Activated CD4-positive, alpha-beta memory T cell treated with anti-CD3 and anti-CD28 coated beads, Interleukin-2, amount 10 ng/mL, durations not matched to agents 7 days and 5 days (primary cell): ENCODE measurements at regions of chr3 and their contacts with region 1.

Region 1: DNA sequence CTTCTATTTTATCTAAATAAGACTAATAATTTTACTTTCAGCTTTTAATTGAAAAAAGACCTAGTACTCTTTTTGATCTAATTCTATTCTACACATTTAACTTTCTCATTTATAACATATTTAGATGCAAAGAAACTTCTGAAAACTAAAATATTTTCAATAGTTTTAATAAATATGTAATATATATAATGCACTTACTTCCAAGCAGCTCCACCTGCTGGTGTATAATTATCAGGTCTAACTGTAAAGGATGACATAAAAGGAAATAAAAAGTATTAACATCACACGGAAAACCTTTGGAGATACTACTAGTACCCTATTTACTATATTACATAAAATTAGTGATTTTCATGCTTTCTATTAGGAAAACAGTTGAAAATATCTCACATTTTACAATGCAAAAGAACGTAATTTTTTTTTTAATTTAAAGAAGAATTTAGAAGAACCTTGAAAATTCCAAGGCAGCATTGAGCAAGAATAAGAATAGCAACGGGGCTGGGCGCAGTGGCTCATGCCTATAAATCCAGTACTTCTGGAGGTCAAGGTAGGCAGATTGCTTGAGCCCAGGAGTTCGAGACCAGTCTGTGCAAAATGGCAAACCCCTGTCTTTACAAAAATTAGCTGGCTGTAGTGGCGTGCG is 10.2 kb downstream of the PLSCR5 start:
- DNase-seq: no peak
- H3K4me3 Mint-ChIP-seq: no peak overlapping the region
- H3K27ac Mint-ChIP-seq: no peak overlapping the region
- H3K4me1 Mint-ChIP-seq: no peaks in the 10 kb centered on the region
- H3K27me3 Mint-ChIP-seq: peaks cover 16% of the 10 kb centered on the region

Region 2: GRCh38 chr3:146189519-146190173 is 405.3 kb before region 1 on chr3:
- CTCF ChIA-PET with region 1: interaction called, 10 read pairs
- POLR2A ChIA-PET with region 1: no interaction called
- DNase-seq: peak; percentile 16
- H3K4me3 Mint-ChIP-seq: no peak overlapping the region
- H3K27ac Mint-ChIP-seq: no peak overlapping the region
- H3K4me1 Mint-ChIP-seq: no peaks in the 10 kb centered on the region
- H3K27me3 Mint-ChIP-seq: peaks cover 1% of the 10 kb centered on the region

Region 3: DNA sequence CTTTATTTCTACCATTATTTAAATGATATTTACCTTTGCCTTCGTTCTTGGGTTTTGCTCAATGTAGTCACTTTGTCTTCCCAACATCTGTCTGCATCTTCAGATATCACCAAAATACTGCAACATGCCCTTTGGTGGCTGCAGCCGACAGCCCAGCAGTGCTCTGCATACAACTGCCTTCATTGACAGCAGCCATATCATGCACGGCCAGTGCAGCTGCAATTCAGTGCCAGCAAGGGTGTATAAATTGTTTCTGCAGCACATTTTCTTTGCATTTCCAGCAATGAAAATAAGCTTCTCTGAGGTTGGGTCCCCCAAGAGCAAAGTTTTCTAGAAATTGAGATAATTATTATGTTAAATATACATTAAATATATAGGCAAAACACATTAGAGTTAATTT is 16.1 kb after region 1 on chr3:
- CTCF ChIA-PET with region 1: no interaction called
- POLR2A ChIA-PET with region 1: no interaction called
- DNase-seq: no peak
- H3K4me3 Mint-ChIP-seq: no peak overlapping the region
- H3K27ac Mint-ChIP-seq: no peak overlapping the region
- H3K4me1 Mint-ChIP-seq: no peaks in the 10 kb centered on the region
- H3K27me3 Mint-ChIP-seq: no peaks in the 10 kb centered on the region

Region 4: DNA sequence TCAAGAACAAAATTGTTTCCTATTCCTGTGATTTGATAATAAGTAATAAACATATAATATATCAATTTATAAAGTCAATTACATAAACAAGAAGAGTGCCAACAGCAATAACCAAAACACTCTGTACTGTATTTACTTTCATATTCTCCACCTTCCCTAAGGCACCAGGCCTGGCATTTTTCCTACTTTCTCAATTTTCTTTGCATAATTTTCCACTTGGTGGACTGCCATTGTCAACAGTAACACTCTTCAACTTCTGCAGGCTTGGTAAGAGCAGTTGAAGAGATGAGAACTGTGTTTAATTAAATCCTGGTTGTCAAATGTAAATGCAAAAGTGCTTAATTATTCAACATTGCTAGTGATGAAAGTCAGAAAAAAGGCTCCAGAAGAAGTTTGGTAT is 240.0 kb after region 1 on chr3:
- CTCF ChIA-PET with region 1: no interaction called
- POLR2A ChIA-PET with region 1: no interaction called
- DNase-seq: no peak
- H3K4me3 Mint-ChIP-seq: no peak overlapping the region
- H3K27ac Mint-ChIP-seq: no peak overlapping the region
- H3K4me1 Mint-ChIP-seq: no peaks in the 10 kb centered on the region
- H3K27me3 Mint-ChIP-seq: no peaks in the 10 kb centered on the region